ENCODE measurements at regions of chr4 and their contacts with region 1.

Region 1: DNA sequence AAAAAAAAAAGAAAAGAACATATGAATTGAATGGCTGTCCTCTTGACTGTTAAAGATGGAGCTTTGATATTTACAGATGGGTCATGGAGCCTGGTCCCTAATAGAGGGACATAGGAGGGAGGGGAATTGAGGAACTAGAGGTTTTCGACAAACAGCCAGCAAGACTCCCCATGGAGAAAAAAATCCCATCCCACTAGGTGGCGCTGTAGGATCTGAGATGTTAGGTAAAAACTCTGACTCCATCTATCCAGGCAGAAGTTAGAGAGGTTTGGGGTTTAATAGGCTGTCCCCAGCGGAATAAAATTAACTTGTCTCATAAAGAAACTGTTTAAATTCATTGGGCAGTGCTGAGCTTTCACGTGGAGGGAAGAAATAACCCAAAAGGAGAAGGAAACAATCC is 45.9 kb downstream of the HMGB2 start:
- DNase-seq: peak; percentile 76
- H3K4me3 Mint-ChIP-seq: no peak overlapping the region
- H3K27ac Mint-ChIP-seq: no peak overlapping the region
- H3K4me1 Mint-ChIP-seq: peaks cover 13% of the 10 kb centered on the region
- H3K27me3 Mint-ChIP-seq: no peaks in the 10 kb centered on the region

Region 2: DNA sequence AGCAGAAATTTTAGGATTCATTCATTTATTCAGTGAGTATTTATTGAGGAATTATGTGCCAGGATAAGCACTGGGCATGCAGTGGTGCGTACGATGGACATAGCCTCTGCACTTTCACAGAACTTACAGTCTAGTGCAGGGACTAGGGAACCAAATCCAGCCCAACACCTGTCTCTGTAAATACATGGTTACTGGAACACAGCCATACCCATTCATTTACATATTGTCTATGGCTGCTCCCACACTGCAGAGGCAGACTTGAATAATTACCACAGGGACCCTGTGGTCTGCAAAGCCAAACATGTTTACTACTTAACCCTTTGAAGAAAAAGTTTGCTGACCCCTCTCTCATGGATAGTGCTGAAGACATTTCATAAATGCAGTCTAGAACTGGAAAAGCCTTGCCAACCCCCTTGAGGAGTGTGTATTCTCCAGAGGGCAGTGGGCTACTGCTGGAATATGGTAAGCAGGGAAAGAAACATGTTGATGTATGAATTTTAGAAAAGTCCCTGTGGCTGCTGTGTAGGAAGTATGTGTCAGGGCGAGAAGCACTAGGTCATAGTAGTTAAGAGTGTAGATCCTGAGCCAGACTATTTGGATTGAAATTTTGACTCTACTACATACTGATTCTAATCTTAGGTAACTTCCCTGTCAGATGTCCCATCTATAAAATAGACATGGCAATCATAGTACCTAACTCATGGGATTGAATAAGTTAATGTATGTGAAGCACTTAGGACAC is 44.2 kb before region 1 on chr4:
- CTCF ChIA-PET with region 1: no interaction called
- POLR2A ChIA-PET with region 1: no interaction called
- intact Hi-C with region 1: no loop called
- DNase-seq: no peak
- H3K4me3 Mint-ChIP-seq: no peak overlapping the region
- H3K27ac Mint-ChIP-seq: no peak overlapping the region
- H3K4me1 Mint-ChIP-seq: peaks cover 26% of the 10 kb centered on the region
- H3K27me3 Mint-ChIP-seq: no peaks in the 10 kb centered on the region

Region 3: DNA sequence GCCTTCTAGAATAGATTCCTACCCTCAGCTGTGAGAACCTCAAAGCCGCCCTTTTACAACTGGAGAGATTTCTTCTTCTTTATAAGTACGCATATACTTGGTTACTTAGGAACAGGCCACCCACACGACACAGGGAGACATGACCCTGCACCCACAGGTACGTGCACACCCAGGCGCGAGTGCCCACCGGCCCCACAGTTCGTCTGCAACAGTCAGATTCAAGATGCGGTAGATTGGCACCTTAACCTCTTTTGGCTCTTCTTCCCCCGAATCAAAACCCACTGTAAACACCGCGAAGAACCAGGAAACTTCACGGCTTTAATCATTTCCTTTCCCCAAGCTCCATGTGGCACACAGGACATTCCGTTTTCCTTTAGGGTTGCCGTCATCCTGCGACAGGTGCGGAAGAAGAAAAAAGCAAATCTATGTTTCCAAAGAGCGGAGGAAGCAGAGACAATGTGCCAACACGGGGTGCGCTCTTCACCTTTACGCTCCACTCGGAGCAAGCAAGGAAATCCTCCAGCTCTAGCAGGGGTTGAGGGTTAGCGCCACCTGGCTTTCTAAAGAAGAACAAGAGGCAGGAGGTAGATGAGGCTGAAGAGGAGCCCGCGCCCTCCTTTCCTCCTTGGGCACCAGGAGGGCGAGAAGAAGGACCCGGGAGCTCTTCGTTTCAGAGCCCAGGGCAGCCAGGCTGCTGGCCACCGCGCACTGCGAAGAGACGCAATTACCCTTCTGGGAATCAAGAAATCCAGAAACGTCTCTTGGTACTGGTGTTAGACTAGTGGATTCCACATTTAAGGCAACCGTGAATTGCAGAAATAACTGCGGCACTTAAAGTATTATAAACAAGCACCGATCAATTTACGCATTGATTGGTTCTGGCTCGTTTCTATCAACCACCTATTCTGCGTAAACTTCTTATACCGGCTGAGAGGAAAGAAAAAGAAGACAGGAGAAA is 206.0 kb after region 1 on chr4:
- CTCF ChIA-PET with region 1: interaction called, 4 read pairs
- POLR2A ChIA-PET with region 1: no interaction called
- intact Hi-C with region 1: loop called (anchors 1 kb)
- DNase-seq: peak; percentile 72
- H3K4me3 Mint-ChIP-seq: peak overlapping the region; percentile 77
- H3K27ac Mint-ChIP-seq: no peak overlapping the region
- H3K4me1 Mint-ChIP-seq: peaks cover 14% of the 10 kb centered on the region
- H3K27me3 Mint-ChIP-seq: peaks cover 21% of the 10 kb centered on the region

Measured in activated CD4-positive, alpha-beta memory T cell treated with anti-CD3 and anti-CD28 coated beads for 36 hours (primary cell).